ENCODE measurements at regions of chr12 and their contacts with region 1.

Region 1: GRCh38 chr12:128259556-128260070 is 7.4 kb upstream of the TMEM132C start:
- DNase-seq: no peak
- ATAC-seq: peak in 3 of 8 donors; percentile 42 to 64 (median 57)
- H3K4me3 ChIP-seq: no peak overlapping the region
- H3K27ac ChIP-seq: no peak overlapping the region
- H3K4me1 ChIP-seq: no peaks in the 10 kb centered on the region
- H3K27me3 ChIP-seq: peaks cover 0 to 47% (median 18%) of the 10 kb centered on the region in 7 donors
- CTCF ChIP-seq: peak; percentile 31 to 73 (median 66)

Region 2: GRCh38 chr12:128316973-128317526 is 57.4 kb after region 1 on chr12:
- intact Hi-C with region 1: loop called in 1 of 10 experiments (anchors 10 kb)
- DNase-seq: peak in 1 of 2 donors; percentile 21
- ATAC-seq: peak in 7 of 8 donors; percentile 27 to 76 (median 68)
- H3K4me3 ChIP-seq: no peak overlapping the region
- H3K27ac ChIP-seq: peak overlapping the region in 5 of 10 donors; percentile 22 to 59 (median 47)
- H3K4me1 ChIP-seq: peaks cover 0 to 25% (median 0%) of the 10 kb centered on the region in 9 donors
- H3K27me3 ChIP-seq: peaks cover 0 to 9% (median 3%) of the 10 kb centered on the region in 7 donors
- CTCF ChIP-seq: no peak

Region 3: DNA sequence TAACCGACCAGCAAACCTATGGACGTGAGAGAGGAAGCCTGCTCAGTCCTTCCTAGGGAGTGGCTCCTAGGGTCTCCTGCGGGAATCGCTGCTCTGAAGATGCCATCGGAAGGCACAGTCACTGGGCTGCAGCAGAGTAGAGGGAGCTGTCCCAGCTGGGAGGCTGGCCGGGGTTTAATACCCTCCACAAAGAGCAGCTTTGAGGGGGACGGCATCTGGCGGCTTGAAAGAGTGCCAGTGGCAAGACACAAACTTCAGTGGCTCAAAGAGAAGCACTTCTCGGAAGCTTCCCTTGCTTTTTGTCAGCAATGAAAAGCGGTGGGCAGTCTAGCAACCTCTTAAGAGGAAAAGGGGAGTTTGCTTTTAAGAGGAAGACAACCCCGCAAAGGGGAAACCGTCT is 121.9 kb after region 1 on chr12:
- intact Hi-C with region 1: loop called in 5 of 10 experiments (anchors 5 to 10 kb)
- DNase-seq: no peak
- ATAC-seq: peak in 1 of 8 donors; percentile 35
- H3K4me3 ChIP-seq: peak overlapping the region in 1 of 10 donors; percentile 20
- H3K27ac ChIP-seq: no peak overlapping the region
- H3K4me1 ChIP-seq: no peaks in the 10 kb centered on the region
- H3K27me3 ChIP-seq: peaks cover 0 to 54% (median 26%) of the 10 kb centered on the region in 7 donors
- CTCF ChIP-seq: no peak

Region 4: DNA sequence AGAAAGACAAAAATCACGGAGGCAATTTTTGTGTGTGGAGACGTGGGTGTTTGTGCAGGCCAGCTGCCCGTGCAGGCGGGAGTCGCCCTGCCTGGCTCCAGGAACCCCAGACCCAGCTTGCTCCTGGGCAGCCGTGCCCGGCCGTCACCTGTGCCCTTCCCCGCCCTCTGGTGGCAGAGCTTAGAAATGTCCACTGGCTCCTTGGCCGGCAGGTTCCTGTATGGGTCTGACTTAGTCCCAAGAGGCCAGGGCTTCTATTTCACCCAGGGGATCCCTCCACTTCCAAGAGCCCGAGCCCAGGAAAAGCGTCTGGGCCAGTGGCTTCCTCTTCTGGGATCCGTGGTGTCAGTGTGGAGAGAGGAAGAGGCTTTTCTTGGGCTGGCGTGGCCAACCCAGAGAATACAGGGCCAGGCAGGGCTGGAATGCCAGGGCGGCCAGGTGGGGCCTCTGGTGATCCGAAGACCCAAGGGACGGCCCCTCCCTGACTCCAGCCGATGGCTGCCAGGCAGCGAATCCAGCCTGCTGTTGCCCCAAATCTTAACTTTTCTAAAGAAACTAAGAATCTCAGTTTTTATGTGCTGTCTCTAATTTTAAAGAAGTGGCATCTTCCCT is 128.3 kb after region 1 on chr12:
- intact Hi-C with region 1: loop called in 5 of 10 experiments (anchors 5 to 10 kb)
- DNase-seq: peak; percentile 33 to 37
- ATAC-seq: peak in 7 of 8 donors; percentile 44 to 69 (median 50)
- H3K4me3 ChIP-seq: no peak overlapping the region
- H3K27ac ChIP-seq: peak overlapping the region in 5 of 10 donors; percentile 13 to 49 (median 35)
- H3K4me1 ChIP-seq: peaks cover 0 to 10% (median 0%) of the 10 kb centered on the region in 9 donors
- H3K27me3 ChIP-seq: peaks cover 0 to 49% (median 24%) of the 10 kb centered on the region in 7 donors
- CTCF ChIP-seq: peak; percentile 27 to 66 (median 60)

Region 5: DNA sequence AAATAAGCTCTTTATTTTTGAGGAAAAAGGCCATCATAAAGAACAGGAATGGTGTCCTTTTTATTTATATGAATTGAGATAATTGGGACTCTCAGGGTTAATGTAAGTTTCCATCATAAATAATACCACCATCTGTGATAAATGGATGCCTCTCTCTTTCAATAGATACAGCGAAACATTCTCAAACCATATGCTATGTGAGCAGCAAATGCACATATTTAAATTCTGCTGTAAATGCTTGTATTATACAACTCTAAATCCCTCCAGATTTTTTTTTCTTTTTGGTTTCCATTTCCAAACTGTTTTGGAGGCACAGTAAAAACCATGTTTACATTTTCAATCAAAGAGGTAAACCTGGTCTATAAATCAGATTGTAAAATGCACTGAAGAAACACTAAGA is 139.6 kb after region 1 on chr12:
- intact Hi-C with region 1: no loop called
- DNase-seq: no peak
- ATAC-seq: no peak
- H3K4me3 ChIP-seq: no peak overlapping the region
- H3K27ac ChIP-seq: no peak overlapping the region
- H3K4me1 ChIP-seq: no peaks in the 10 kb centered on the region
- H3K27me3 ChIP-seq: peaks cover 0 to 11% (median 0%) of the 10 kb centered on the region in 7 donors
- CTCF ChIP-seq: no peak

Region 6: GRCh38 chr12:129903956-129904829 is 1644.6 kb after region 1 on chr12 and contains the start of gene TMEM132D:
- intact Hi-C with region 1: loop called in 2 of 10 experiments (anchors 10 kb)
- DNase-seq: no peak
- ATAC-seq: no peak
- H3K4me3 ChIP-seq: no peak within 1 kb of the TSS
- H3K27ac ChIP-seq: no peak within 1 kb of the TSS
- H3K4me1 ChIP-seq: no peaks in the 10 kb centered on the region
- H3K27me3 ChIP-seq: peaks cover 11 to 81% (median 56%) of the 10 kb centered on the region in 7 donors
- CTCF ChIP-seq: no peak
- total RNA-seq, gene TMEM132D: not detected

Region 7: DNA sequence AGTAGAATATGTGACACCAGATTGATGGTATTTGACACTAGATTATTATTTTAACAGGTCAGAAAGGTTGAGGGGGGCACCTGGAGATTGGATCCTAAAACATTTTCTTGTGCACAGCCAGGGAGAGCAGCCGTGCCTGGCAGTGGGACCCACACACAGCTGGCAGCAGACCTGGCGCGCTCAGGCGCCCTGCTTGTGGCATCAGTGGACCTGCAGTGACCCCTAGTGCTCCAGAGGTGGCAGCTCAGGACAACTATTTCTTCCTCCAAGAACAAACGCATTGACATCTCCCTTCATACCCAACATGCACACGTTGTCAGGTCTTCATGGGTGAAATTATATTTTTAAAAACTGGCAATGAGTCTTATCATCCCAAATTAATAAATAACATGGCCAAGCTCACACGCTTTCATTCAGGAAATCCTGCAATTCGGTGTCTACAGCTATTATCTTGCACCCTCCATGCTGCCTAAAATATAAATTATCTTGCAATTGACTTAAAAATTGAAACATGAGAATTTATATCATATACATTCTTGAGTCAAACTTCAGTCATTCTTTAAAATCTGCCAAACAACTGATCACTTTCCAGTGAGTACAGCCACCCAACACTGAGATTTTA is 1651.9 kb after region 1 on chr12:
- intact Hi-C with region 1: loop called in 6 of 10 experiments (anchors 5 to 10 kb)
- DNase-seq: peak; percentile 12 to 22
- ATAC-seq: peak in 5 of 8 donors; percentile 58 to 84 (median 73)
- H3K4me3 ChIP-seq: no peak overlapping the region
- H3K27ac ChIP-seq: no peak overlapping the region
- H3K4me1 ChIP-seq: no peaks in the 10 kb centered on the region
- H3K27me3 ChIP-seq: peaks cover 0 to 61% (median 23%) of the 10 kb centered on the region in 7 donors
- CTCF ChIP-seq: peak; percentile 18 to 71 (median 61)

Measured in heart right ventricle (tissue), 16 donors.